Ascending aorta (tissue), 2 donors: ENCODE measurements at regions of chr1 and their contacts with region 1.

Region 1: GRCh38 chr1:173429471-173430402 is 47.4 kb upstream of the PRDX6 start:
- DNase-seq: peak; percentile 49 to 95
- H3K4me3 ChIP-seq: peak overlapping the region; percentile 34 to 46
- H3K27ac ChIP-seq: peak overlapping the region; percentile 75 to 85
- H3K4me1 ChIP-seq: peaks cover 0 to 14% of the 10 kb centered on the region in 2 donors
- H3K27me3 ChIP-seq: no peaks in the 10 kb centered on the region
- CTCF ChIP-seq: peak; percentile 48 to 69 (median 48)

Region 2: DNA sequence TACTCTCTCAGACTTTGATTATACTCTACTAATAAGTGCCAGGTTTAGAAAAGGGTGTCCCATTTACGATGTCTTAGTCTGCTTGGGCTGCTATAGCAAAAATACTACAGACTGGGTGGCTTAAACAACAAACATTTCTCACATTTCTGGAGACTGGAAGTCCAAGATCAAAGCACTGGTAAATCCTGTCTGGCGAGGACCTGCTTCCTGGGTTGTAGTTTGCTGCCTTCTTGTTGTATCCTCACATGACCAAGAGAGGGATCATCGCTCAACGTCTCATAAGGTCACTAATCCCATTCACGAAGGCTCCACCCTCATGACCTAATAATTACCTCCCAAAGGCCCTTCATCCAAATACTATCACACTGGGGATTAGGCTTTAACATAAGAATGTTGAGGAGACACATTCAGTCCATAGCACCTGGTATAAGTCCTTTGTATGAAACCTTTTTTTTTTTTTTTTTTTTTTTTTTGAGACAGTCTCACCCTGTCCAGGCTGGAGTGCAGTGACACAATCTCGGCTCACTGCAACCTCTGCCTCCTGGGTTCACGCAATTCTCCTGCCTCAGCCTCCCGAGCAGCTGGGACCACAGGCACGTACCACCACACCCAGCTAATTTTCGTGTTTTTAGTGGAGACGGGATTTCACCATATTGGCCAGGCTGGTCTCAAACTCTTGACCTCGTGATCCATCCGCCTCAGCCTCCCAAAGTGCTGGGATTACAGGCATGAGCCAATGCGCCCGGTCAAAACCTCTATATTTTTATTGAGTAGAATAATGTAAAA is 59.6 kb after region 1 on chr1:
- intact Hi-C with region 1: no loop called
- DNase-seq: no peak
- H3K4me3 ChIP-seq: no peak overlapping the region
- H3K27ac ChIP-seq: no peak overlapping the region
- H3K4me1 ChIP-seq: no peaks in the 10 kb centered on the region
- H3K27me3 ChIP-seq: no peaks in the 10 kb centered on the region
- CTCF ChIP-seq: no peak

Region 3: DNA sequence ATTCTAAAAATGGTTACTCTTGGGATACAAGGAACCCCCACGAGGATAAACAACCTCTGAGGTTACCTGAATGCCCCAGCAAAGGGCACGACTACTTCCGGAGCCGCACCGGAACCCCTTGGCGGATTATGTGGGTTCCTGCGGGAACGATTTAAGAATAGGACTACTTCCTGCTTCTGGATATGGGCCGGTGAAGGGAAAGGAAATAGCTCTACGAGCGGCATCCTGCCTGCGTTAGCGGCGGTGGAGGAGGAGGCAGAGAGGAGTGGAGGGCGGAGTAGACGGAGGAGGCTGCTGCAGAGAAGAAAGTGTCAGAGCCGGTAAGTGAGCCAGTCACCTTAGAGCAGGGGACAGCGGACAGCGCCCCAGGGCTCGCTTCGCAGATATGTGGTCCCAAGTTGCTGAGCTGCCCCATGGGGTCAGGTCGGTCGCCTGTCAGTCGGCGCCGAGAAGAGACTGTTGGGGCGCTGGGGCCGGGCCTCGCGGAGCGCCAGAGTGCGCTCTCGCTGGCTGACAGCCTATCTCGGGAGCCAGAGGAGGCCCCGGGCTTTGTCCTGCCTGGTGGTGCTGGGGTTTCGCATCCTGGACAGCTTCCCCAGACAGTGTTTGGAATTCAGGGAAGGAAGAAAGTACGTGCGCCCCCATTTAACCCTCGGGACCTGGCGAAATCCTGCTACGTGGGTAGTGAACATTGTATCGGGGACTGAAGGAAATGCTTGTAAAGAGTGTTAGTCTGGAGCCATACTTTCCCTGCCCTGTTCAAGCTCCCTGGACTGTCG is 285.2 kb after region 1 on chr1 and contains the start of gene KLHL20:
- intact Hi-C with region 1: loop called (anchors 1 kb)
- DNase-seq: peak; percentile 21 to 89
- H3K4me3 ChIP-seq: peak within 1 kb of the TSS; percentile 93 to 96
- H3K27ac ChIP-seq: peak within 1 kb of the TSS; percentile 92 to 94
- H3K4me1 ChIP-seq: peaks cover 0 to 14% of the 10 kb centered on the region in 2 donors
- H3K27me3 ChIP-seq: no peaks in the 10 kb centered on the region
- CTCF ChIP-seq: no peak
- total RNA-seq, gene KLHL20: 15.5 TPM

Region 4: GRCh38 chr1:173900427-173900826 is 470.7 kb after region 1 on chr1:
- intact Hi-C with region 1: no loop called
- DNase-seq: no peak
- H3K4me3 ChIP-seq: no peak overlapping the region
- H3K27ac ChIP-seq: no peak overlapping the region
- H3K4me1 ChIP-seq: no peaks in the 10 kb centered on the region
- H3K27me3 ChIP-seq: no peaks in the 10 kb centered on the region
- CTCF ChIP-seq: no peak